HEK293 (cell line): ENCODE measurements at regions of chr2 and their contacts with region 1.

Region 1: DNA sequence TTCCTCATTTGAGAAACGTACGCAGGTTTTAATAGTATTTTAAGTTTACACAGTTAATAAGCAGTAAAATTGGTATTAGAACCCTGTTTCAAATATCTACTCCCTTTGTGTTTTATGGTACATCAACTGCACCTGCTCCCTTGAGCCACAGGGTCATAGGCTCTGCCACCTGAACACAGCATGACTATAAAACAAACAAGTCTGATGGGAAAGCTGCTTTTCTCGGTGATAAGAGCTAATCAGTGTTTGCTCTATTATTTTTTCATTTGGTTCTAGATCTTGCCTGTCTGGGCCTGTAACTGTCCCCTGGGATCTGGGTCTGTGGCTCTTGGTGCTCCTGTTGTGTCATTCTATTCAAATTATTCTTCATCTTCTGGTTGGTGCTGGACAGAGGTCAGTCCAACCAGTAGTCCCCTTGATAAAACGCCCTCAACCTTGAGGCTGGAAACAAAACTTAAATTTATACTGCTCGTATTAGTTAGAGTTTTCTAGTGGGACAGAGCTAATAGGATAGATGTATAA is 314.8 kb upstream of the LRP1B start:
- H3K4me3 ChIP-seq: no peak overlapping the region
- H3K27ac ChIP-seq: no peak overlapping the region
- H3K4me1 ChIP-seq: no peaks in the 10 kb centered on the region
- CTCF ChIP-seq: no peak

Region 2: DNA sequence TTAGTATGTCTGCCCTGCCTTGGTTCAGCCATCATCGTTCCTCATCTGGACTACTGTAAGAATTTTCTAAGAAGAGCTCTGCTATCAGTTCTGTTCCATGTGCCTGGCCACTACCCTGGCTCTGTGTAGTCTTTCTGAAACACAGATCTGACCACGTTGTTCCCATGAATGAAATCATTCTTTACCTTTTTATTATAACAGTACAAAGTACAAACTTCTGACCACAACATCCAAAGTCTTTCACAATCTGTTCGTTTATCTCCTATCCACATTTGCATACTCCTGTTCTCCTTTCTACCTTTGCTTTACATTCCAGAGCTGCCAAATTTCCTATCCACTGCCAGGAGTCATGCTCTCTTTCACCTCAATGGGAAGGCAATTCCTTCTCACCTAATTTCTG is 30.2 kb before region 1 on chr2:
- CTCF ChIA-PET with region 1: no interaction called
- POLR2A ChIA-PET with region 1: interaction called, 11 read pairs
- H3K4me3 ChIP-seq: no peak overlapping the region
- H3K27ac ChIP-seq: no peak overlapping the region
- H3K4me1 ChIP-seq: no peaks in the 10 kb centered on the region
- CTCF ChIP-seq: no peak